Right ventricle myocardium inferior (tissue), 1 donor: ENCODE measurements at regions of chr3 and their contacts with region 1.

Region 1: DNA sequence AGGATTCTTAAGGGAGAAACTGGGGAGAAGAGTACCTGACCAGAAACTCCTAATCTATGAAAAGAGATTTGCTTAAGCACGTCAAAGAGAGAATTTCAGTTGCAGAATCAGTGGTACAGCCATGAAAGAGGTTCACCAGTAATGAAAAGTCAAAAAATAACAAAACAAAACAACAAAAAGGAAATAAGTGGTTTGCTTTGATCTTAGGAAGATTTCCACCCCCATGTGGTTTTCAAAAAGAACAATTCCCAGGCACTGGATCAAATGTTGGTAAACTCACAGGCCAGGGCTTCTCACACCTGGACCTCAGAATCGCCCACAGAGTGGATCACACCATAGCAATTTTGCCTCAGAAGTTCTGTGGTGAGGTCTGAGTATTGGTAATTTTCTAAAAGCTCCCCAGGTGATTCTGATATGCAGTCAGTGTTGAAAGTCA is 67.5 kb downstream of the TMEM39A start:
- DNase-seq: no peak
- ATAC-seq: no peak

Region 2: DNA sequence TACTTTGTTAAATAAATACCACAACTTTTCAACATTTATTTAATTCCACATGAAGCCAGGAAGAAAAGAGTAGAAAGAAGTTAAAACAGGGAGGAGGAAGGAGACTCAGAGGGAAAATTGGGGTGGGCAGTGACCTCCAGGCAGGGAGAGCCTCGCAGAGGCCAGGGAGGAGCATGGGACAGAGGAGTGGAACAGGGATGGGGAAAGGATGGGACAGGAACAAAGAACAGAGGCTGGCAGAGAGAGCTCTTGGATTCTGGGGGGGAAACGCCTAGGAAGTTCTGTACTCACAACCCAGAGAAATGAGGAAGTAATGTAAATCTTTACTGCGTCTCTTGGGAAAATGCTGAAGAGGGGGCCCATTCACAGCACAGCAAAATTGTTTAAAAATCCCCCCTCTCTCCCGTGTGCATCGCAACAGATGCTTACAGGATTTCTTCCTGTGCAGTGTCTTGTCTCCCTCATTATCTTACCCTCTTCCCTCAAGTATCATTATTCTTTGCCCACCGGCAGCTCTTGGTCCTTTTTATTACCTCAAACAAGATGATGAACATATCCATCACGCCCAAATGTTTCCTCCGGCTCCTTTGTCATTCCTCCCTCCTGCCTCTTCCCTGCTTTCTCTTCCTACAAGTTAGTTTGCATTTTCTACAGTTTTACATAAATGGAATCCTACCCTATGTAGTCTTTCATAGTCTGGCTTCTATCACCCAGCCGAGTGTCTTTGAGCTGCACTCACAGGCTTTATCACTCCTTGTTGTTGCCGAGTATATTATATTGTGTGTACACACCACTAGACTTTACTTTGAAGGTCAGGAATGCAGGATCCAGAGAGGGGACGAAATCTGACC is 36.2 kb before region 1 on chr3:
- intact Hi-C with region 1: loop called (anchors 5 kb)
- DNase-seq: no peak
- ATAC-seq: no peak

Region 3: DNA sequence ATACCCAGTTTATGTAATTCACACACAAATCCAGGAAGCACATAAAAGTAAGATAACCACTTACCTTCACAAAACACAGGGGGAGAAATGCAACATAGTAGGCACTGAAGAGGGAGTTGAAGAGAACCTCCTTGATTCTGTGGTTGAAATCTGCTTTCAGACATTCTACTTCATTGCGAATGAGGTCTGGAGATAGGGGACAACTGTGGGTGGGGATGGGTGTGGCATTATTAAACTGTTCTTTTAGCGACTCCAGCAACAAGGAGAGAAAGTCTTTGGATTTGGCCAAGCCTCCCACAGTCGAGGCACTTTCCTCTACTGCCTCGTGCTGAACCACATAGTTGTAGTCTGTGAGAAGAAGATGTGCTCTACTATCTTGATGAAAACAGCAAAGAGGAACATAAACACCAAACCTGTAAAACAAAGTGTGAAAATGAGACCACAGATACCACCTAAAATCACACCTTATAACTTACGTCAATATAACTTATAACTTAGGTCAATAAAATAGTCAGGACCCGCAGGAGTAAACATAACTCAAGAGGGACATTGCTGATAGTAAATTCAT is 41.8 kb after region 1 on chr3:
- intact Hi-C with region 1: no loop called
- DNase-seq: no peak
- ATAC-seq: no peak